Heart right ventricle (tissue), 16 donors: ENCODE measurements at regions of chr1 and their contacts with region 1.

Region 1: DNA sequence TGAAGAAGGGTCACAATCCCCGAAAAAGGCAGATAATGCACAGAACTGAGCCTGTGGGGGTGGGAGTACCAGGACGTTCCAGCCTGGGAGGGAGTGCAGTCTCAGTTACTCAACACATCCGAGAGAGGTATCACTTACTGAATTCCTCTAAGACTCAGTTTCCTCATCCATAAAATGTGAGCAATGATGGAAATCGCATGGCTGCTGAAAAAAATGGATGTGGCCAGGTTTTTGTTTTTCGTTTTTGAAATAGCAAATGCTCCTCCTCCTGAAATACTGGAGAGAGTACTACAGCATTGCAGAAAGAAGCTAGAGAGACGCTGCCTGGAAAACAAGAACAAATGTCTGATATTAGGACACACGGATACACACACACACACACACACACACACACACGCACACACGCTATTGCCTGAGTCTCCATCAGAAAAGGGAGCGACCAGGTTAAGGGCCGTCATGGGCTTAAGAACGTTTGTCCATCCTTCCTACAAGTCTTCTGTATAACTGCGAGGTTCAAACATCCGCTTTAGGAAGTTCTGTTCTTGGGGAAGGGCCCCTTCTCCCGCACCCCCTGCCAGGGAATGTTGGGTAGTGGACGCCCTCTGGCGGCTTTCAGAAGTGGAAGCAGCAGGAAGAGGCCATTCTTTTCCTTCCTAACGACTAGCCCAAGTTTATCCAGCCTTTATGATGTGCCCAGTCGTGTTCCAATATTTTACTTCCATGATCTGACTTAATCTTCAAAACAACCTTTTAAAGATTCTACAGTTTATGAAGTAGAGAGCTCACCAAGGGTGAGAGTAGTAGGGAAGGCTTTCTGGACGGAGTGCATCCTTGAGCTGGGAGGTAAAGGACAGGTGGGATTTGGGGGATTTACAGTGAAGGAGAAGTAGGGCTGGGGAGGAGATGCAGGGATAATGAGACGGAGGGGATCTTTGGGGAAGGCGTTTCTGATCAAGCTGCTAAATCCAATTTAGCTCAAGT is 699 bp upstream of the NES start:
- DNase-seq: peak; percentile 68 to 87
- ATAC-seq: peak; percentile 53 to 83 (median 70)
- H3K4me3 ChIP-seq: peak overlapping the region; percentile 61 to 94 (median 84)
- H3K27ac ChIP-seq: peak overlapping the region; percentile 68 to 99 (median 92)
- H3K4me1 ChIP-seq: peaks cover 23 to 53% (median 42%) of the 10 kb centered on the region in 9 donors
- H3K27me3 ChIP-seq: peaks cover 0 to 68% (median 0%) of the 10 kb centered on the region in 7 donors
- CTCF ChIP-seq: peak; percentile 76 to 95 (median 89)

Region 2: GRCh38 chr1:156625436-156626078 is 52.3 kb before region 1 on chr1:
- intact Hi-C with region 1: loop called in 3 of 10 experiments (anchors 1 to 5 kb)
- DNase-seq: peak; percentile 43 to 73
- ATAC-seq: peak; percentile 27 to 75 (median 56)
- H3K4me3 ChIP-seq: peak overlapping the region; percentile 34 to 58 (median 49)
- H3K27ac ChIP-seq: peak overlapping the region in 7 of 10 donors; percentile 31 to 76 (median 64)
- H3K4me1 ChIP-seq: peaks cover 10 to 34% (median 24%) of the 10 kb centered on the region in 9 donors
- H3K27me3 ChIP-seq: peaks cover 19 to 100% (median 70%) of the 10 kb centered on the region in 7 donors
- CTCF ChIP-seq: peak; percentile 54 to 87 (median 81)

Region 3: DNA sequence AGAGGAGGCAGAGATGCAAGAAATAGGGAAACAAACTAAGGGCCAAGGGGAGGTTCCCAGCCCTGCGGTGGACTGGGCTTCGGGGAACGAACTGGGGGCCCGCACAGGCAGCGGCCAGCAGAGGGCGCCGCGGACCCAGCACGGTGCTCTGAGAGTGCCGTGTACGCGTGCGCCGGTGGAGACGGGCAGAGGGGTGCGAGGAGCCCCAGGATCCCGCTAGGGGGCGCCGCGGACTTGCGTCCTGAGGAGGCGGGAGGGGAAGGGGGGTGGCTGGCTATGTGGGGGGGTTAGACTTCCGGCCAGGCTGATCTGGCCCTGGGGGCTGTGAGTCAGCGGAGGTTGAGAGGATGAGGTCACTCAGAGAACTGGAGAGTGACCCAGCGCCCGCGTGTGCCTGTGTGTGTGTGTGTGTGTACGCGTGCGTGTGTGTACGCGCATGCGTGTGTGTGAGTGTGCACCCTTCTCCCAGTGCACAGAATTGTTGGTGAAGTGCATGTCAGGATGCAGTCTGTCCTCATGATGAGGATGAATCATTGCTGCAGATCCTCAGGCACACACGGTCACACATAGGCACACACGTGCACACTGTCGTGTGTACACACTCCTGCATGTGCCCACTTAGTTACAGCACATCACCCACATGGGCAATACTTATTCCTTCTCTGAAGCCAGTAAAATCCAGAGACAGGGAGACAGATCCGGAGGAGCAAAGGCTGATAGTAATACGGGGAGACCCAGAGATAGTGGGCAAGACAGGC is 17.7 kb before region 1 on chr1:
- intact Hi-C with region 1: loop called (anchors 1 to 2 kb)
- DNase-seq: peak; percentile 97 to 98
- ATAC-seq: peak; percentile 82 to 91 (median 85)
- H3K4me3 ChIP-seq: peak overlapping the region in 8 of 10 donors; percentile 18 to 46 (median 39)
- H3K27ac ChIP-seq: peak overlapping the region; percentile 68 to 99 (median 96)
- H3K4me1 ChIP-seq: peaks cover 54 to 85% (median 80%) of the 10 kb centered on the region in 9 donors
- H3K27me3 ChIP-seq: peaks cover 0 to 28% (median 18%) of the 10 kb centered on the region in 7 donors
- CTCF ChIP-seq: peak; percentile 93 to 100 (median 99)

Region 4: GRCh38 chr1:156666862-156667609 is 10.9 kb before region 1 on chr1:
- intact Hi-C with region 1: loop called in 1 of 10 experiments (anchors 1 kb)
- DNase-seq: no peak
- ATAC-seq: peak in 6 of 8 donors; percentile 0 to 22 (median 4)
- H3K4me3 ChIP-seq: no peak overlapping the region
- H3K27ac ChIP-seq: peak overlapping the region; percentile 88 to 99 (median 96)
- H3K4me1 ChIP-seq: peaks cover 78 to 100% (median 97%) of the 10 kb centered on the region in 9 donors
- H3K27me3 ChIP-seq: no peaks in the 10 kb centered on the region
- CTCF ChIP-seq: no peak

Region 5: DNA sequence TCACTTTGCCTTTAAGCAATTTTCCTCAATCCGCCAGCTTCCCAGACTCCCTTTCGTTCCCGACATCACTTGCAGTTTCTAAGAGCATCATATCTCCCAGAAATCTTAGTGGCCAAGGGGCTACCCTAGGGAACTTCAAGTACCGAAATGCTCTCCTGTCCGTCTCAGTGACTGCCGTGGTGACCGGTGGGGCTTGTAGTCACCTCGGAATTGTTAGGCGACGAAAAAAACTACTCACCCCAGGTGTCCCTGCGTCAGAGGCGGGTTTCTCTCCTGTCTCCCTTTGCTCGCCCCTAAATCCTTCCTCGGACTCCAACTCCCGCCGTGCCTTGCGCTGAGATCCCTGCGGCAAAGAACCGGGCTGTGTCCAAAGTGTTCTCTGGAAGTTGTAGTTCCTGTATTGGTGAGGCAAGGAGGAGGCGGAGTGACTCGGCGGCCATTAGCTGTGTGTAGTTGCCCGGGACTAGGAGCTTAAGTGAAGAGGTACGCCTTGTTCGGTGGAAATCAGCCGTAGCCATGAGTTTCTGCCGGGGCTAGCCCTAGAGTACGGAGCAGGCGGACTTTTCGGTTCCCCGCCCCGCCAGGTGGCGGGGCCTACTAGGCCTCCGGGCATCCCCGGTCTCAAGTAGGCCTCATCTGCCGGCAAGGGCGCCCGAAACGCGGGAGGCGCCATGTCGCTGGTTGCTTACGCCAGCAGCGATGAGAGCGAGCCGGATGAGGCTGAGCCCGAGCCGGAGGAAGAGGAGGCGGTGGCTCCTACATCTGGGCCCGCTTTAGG is 89.4 kb after region 1 on chr1 and contains the start of gene PRCC:
- intact Hi-C with region 1: loop called in 1 of 10 experiments (anchors 5 kb)
- DNase-seq: peak; percentile 94 to 99
- ATAC-seq: peak; percentile 96 to 98 (median 97)
- H3K4me3 ChIP-seq: peak within 1 kb of the TSS; percentile 73 to 99 (median 95)
- H3K27ac ChIP-seq: peak within 1 kb of the TSS; percentile 90 to 98 (median 96)
- H3K4me1 ChIP-seq: peaks cover 12 to 53% (median 45%) of the 10 kb centered on the region in 9 donors
- H3K27me3 ChIP-seq: no peaks in the 10 kb centered on the region
- CTCF ChIP-seq: no peak
- total RNA-seq, gene PRCC: 32.1 to 56.9 (median 44.2) TPM